CD8-positive, alpha-beta T cell (primary cell): ENCODE measurements at regions of chr7 and their contacts with region 1.

Region 1: DNA sequence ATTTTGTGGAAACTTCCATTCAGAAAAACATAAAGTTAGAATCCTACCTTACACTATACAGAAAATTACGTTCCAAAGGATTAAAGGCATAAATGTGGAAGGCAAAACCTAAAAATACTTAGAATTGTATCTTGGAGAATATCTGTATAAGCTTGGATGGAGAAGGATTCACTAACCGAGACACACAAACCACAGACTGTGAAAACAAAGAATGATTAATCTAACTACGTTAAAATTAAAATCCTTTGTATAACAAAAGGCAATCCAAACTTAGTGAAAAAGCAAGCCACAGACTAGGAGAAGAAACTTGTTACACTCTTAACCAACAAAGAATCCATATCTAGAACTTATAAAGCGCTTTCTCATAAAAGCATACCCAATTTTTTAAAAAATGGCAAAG is 678.8 kb downstream of the INHBA start:
- DNase-seq: no peak
- ATAC-seq: no peak
- H3K4me3 ChIP-seq: no peak overlapping the region
- H3K4me3 Mint-ChIP-seq: no peak overlapping the region
- H3K27ac ChIP-seq: no peak overlapping the region
- H3K27ac Mint-ChIP-seq: no peak overlapping the region
- H3K4me1 ChIP-seq: no peaks in the 10 kb centered on the region
- H3K4me1 Mint-ChIP-seq: no peaks in the 10 kb centered on the region
- H3K27me3 ChIP-seq: no peaks in the 10 kb centered on the region
- H3K27me3 Mint-ChIP-seq: no peaks in the 10 kb centered on the region
- CTCF ChIP-seq: no peak

Region 2: GRCh38 chr7:39304668-39305405 is 1719.3 kb before region 1 on chr7:
- CTCF ChIA-PET with region 1: no interaction called
- POLR2A ChIA-PET with region 1: no interaction called
- intact Hi-C with region 1: no loop called
- DNase-seq: no peak
- ATAC-seq: no peak
- H3K4me3 ChIP-seq: no peak overlapping the region
- H3K4me3 Mint-ChIP-seq: no peak overlapping the region
- H3K27ac ChIP-seq: no peak overlapping the region
- H3K27ac Mint-ChIP-seq: no peak overlapping the region
- H3K4me1 ChIP-seq: no peaks in the 10 kb centered on the region
- H3K4me1 Mint-ChIP-seq: no peaks in the 10 kb centered on the region
- H3K27me3 ChIP-seq: no peaks in the 10 kb centered on the region
- H3K27me3 Mint-ChIP-seq: peaks cover 10% of the 10 kb centered on the region
- CTCF ChIP-seq: no peak

Region 3: DNA sequence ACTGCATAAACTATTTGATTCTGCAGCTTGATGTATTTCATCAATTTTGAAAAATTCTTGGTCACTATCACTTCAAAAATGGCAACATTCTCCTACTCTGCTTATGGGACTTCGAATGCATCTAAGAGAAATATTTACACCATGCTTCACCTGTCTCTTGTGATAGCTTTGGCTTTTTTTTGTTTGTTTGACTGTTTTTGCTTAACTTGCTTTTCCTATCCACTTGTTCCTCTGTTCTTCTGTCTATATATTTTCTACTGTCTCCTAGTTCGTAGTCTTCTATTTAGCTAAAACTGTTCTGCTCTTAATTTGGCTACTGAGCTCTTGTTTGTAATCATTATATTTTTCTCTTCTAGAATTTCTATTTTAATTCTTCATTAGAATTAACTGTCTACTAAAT is 584.3 kb after region 1 on chr7:
- CTCF ChIA-PET with region 1: no interaction called
- POLR2A ChIA-PET with region 1: no interaction called
- intact Hi-C with region 1: loop called in 1 of 2 experiments (anchors 5 kb)
- DNase-seq: no peak
- ATAC-seq: no peak
- H3K4me3 ChIP-seq: no peak overlapping the region
- H3K4me3 Mint-ChIP-seq: no peak overlapping the region
- H3K27ac ChIP-seq: no peak overlapping the region
- H3K27ac Mint-ChIP-seq: no peak overlapping the region
- H3K4me1 ChIP-seq: no peaks in the 10 kb centered on the region
- H3K4me1 Mint-ChIP-seq: no peaks in the 10 kb centered on the region
- H3K27me3 ChIP-seq: no peaks in the 10 kb centered on the region
- H3K27me3 Mint-ChIP-seq: no peaks in the 10 kb centered on the region
- CTCF ChIP-seq: no peak